ENCODE measurements at regions of chrX and their contacts with region 1.

Region 1: GRCh38 chrX:100768679-100769338 is 36.9 kb upstream of the SYTL4 start:
- H3K4me3 ChIP-seq: no peak overlapping the region
- H3K27ac ChIP-seq: no peak overlapping the region
- H3K4me1 ChIP-seq: no peaks in the 10 kb centered on the region
- CTCF ChIP-seq: peak; percentile 93

Region 2: GRCh38 chrX:100649550-100650356 is 119.1 kb before region 1 on chrX:
- CTCF ChIA-PET with region 1: interaction called, 11 read pairs
- POLR2A ChIA-PET with region 1: no interaction called
- H3K4me3 ChIP-seq: no peak overlapping the region
- H3K27ac ChIP-seq: no peak overlapping the region
- H3K4me1 ChIP-seq: no peaks in the 10 kb centered on the region
- CTCF ChIP-seq: no peak

Region 3: GRCh38 chrX:100690617-100691016 is 78.2 kb before region 1 on chrX:
- CTCF ChIA-PET with region 1: interaction called, 540 read pairs
- POLR2A ChIA-PET with region 1: interaction called, 3 read pairs
- H3K4me3 ChIP-seq: no peak overlapping the region
- H3K27ac ChIP-seq: no peak overlapping the region
- H3K4me1 ChIP-seq: 0 out of 2 replicates have a peak, but pooled peaks cover 5% of the 10 kb centered on the region
- CTCF ChIP-seq: no peak

Region 4: DNA sequence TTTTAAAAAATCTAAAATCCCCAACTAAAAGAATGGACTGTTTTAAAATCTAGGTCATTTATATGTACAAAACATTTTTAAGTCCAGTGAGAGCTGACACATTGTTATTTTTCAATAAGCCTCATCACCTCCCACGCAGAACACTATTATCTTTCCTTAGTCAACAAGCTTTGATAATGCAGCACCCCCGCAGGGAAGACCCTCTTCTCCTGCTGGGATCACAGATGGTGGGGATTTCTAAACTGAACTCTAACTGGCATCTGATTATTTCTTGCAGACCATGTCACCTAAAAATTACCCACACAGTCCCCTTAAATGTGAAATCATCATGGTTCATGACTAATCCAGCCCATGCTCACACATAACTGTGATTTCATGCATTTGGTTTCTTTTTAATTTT is 48.5 kb before region 1 on chrX:
- CTCF ChIA-PET with region 1: interaction called, 24 read pairs
- POLR2A ChIA-PET with region 1: no interaction called
- H3K4me3 ChIP-seq: no peak overlapping the region
- H3K27ac ChIP-seq: no peak overlapping the region
- H3K4me1 ChIP-seq: no peaks in the 10 kb centered on the region
- CTCF ChIP-seq: no peak

Region 5: GRCh38 chrX:100743009-100743607 is 25.7 kb before region 1 on chrX:
- CTCF ChIA-PET with region 1: interaction called, 13 read pairs
- POLR2A ChIA-PET with region 1: no interaction called
- H3K4me3 ChIP-seq: no peak overlapping the region
- H3K27ac ChIP-seq: no peak overlapping the region
- H3K4me1 ChIP-seq: no peaks in the 10 kb centered on the region; the same call in 1 of the 2 replicates
- CTCF ChIP-seq: no peak

Region 6: DNA sequence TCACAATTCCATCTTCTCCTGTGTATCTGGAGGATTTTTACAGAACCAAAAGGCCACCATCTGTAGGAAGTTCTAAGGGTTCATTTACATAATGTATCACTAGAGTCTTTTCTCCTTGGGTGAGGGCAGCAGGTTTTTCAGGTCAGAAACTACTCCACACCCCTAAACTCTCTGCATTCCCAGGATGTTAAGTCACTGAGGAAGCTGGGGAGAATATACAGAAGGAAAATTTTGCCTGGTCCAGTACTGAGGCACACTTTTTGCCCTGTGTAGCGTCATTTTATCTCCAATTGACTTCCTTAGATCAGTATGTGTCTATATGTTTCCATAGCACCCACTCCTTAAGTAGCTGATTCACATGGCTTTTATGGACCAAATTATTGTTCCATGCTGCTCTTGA is 142.9 kb after region 1 on chrX:
- CTCF ChIA-PET with region 1: no interaction called
- POLR2A ChIA-PET with region 1: no interaction called
- H3K4me3 ChIP-seq: no peak overlapping the region
- H3K27ac ChIP-seq: no peak overlapping the region
- H3K4me1 ChIP-seq: no peaks in the 10 kb centered on the region
- CTCF ChIP-seq: no peak

Measured in HEK293 (cell line).